Endothelial cell of umbilical vein (primary cell): ENCODE measurements at regions of chr6 and their contacts with region 1.

Region 1: GRCh38 chr6:30453508-30454116 is 35.7 kb upstream of the HLA-E start:
- DNase-seq: peak; percentile 93
- H3K4me3 ChIP-seq: no peak overlapping the region
- H3K27ac ChIP-seq: no peak overlapping the region
- H3K4me1 ChIP-seq: no peaks in the 10 kb centered on the region
- H3K27me3 ChIP-seq: peaks cover 76 to 87% of the 10 kb centered on the region in 2 experiments
- CTCF ChIP-seq: peak; percentile 96
- POLR2A ChIP-seq: no peak

Region 2: GRCh38 chr6:30212865-30213666 is 240.5 kb before region 1 on chr6 and contains the start of gene TRIM26:
- CTCF ChIA-PET with region 1: no interaction called
- POLR2A ChIA-PET with region 1: no interaction called
- dilution Hi-C with region 1: no loop called
- intact Hi-C with region 1: no loop called
- DNase-seq: peak; percentile 98
- H3K4me3 ChIP-seq: peak within 1 kb of the TSS; percentile 71 to 84 (median 82)
- H3K27ac ChIP-seq: peak within 1 kb of the TSS; percentile 95
- H3K4me1 ChIP-seq: peaks cover 20% of the 10 kb centered on the region
- H3K27me3 ChIP-seq: no peaks in the 10 kb centered on the region
- CTCF ChIP-seq: no peak
- POLR2A ChIP-seq: peak; percentile 79
- total RNA-seq, gene TRIM26: 34.5 and 35.0 TPM in 2 replicates

Region 3: DNA sequence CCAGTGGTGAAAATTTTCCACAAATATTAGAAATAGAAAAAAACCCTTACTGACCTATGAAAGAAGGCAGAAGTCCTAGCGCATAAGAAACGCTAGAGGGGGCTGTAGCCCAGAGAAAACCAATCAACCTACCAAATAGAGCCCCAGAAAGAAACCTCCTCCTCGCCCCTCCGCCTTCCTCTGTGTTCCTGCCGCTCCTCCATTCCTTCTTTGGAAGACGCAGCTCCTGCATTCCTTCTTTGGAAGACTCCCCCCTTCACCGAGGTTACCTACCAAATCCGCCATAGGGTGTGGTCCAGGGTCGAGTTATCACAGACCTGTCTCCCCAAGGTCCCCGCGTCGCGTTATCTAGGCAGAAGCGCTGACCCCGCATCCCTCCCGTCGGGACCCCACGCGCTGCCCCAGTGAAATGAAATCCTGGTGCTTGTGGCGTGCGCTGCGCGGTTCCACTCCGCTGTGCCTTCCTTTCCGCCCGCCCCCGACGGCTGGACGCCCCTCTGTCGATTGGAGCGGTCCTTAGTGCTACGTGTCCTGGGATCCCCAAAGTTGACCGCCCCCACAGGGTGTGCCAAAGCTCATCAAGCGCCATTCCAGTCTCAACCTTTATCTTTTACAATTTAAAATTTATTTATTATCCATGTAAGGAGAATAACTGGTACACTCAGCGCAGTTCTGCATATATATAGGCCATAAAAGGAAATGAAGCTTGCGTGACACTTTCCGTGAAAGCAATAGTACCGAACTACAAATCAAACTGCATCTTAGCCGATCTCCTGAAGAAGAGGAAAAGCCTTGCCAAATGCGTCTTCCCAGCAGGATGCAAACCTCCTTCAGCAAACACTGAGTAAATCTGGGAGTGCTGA is 95.7 kb before region 1 on chr6:
- CTCF ChIA-PET with region 1: interaction called, 10 read pairs
- POLR2A ChIA-PET with region 1: no interaction called
- dilution Hi-C with region 1: no loop called
- intact Hi-C with region 1: loop called (anchors 1 kb)
- DNase-seq: peak; percentile 71
- H3K4me3 ChIP-seq: peak overlapping the region; percentile 34 to 54 (median 43)
- H3K27ac ChIP-seq: no peak overlapping the region
- H3K4me1 ChIP-seq: peaks cover 5% of the 10 kb centered on the region
- H3K27me3 ChIP-seq: peaks cover 31 to 57% of the 10 kb centered on the region in 2 experiments
- CTCF ChIP-seq: peak; percentile 79 to 83
- POLR2A ChIP-seq: no peak

Region 4: DNA sequence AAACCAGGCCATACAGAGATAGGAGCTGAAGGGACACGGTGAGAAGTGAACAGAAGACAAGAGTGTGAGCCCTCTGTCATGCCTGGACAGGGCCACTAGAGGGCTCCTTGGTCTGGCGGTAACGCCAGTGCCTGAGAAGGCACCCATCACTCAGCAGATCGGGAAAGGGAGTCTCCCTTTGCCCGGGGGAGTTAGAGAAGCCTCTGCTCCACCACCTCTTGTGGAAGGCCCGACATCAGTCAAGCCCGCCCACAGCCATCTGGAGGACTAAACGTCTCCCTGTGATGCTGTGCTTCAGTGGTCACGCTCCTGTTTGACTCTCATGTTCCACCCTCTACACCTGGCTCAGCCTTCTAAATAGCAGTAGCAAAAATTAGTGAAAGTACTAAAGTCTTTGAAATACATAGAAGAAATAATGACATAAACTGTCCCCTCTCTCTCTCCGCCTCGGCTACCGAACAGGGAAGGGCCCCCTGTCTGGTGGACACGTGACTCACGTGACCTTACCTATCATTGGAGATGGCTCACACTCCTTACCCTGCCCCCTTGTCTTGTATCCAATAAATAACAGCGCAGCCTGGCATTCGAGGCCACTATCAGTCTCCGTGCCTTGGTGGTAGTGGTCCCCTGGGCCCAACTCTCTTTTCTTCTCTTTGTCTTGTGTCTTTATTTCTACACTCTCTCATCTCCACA is 42.0 kb before region 1 on chr6:
- CTCF ChIA-PET with region 1: interaction called, 15 read pairs
- POLR2A ChIA-PET with region 1: no interaction called
- dilution Hi-C with region 1: no loop called
- intact Hi-C with region 1: loop called (anchors 1 kb)
- DNase-seq: peak; percentile 41
- H3K4me3 ChIP-seq: no peak overlapping the region
- H3K27ac ChIP-seq: no peak overlapping the region
- H3K4me1 ChIP-seq: no peaks in the 10 kb centered on the region
- H3K27me3 ChIP-seq: peaks cover 23 to 31% of the 10 kb centered on the region in 2 experiments
- CTCF ChIP-seq: peak; percentile 72 to 89
- POLR2A ChIP-seq: no peak

Region 5: DNA sequence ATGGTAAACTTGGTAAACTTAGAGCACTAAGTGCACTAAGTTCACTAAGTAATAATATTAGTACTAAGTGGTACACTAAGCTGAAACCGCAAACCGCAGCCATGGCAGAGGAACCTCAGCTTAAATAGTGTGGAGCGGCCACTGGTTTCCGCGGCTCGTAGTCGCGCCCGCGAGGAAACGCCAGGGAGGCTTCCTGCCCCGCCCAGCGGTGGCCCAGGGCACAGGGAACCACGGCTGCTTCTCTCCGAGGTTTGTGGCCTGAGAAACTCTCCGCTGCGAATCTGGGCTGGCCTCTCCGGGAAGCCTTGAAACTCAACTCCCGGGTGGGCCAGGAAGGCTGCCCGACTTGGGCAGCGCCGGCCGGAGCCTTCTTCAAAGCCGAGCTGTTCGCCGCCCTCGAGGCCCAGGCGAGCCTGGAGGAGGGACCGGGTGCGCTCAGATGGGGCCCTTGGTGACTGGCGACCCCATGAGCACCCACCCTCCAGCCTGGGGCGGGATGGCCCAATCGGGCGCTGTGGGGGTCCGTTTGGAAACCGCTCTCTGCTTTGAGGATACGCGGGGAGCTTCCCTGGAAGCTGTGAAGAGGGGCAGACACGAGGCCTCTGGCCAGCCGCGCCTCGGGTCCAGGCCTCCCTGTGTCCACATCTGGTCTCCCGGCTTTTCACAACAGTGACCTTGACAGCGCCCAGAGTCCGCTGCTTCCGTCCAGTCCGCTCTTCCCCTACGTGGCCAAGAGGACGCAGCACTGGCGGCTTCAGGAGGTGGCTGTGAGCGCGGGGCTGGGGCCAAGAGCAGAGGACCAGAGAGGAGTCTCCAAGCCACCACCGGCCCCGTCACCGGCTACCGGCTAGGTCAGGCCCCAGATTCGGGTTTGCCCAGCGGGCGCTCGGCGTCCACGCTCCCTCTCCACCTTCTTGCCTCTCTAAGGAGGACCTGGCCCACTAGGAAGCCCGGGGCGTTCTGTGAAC is 10.3 kb after region 1 on chr6:
- CTCF ChIA-PET with region 1: interaction called, 51 read pairs
- POLR2A ChIA-PET with region 1: no interaction called
- dilution Hi-C with region 1: no loop called
- intact Hi-C with region 1: no loop called
- DNase-seq: no peak
- H3K4me3 ChIP-seq: no peak overlapping the region
- H3K27ac ChIP-seq: no peak overlapping the region
- H3K4me1 ChIP-seq: peaks cover 2% of the 10 kb centered on the region
- H3K27me3 ChIP-seq: peaks cover 79 to 92% of the 10 kb centered on the region in 2 experiments
- CTCF ChIP-seq: no peak
- POLR2A ChIP-seq: no peak

Region 6: GRCh38 chr6:30590994-30591393 is 137.4 kb after region 1 on chr6:
- CTCF ChIA-PET with region 1: interaction called, 13 read pairs
- POLR2A ChIA-PET with region 1: no interaction called
- dilution Hi-C with region 1: no loop called
- intact Hi-C with region 1: no loop called
- DNase-seq: peak; percentile 49
- H3K4me3 ChIP-seq: no peak overlapping the region
- H3K27ac ChIP-seq: no peak overlapping the region
- H3K4me1 ChIP-seq: peaks cover 2% of the 10 kb centered on the region
- H3K27me3 ChIP-seq: no peaks in the 10 kb centered on the region
- CTCF ChIP-seq: no peak
- POLR2A ChIP-seq: no peak